ENCODE measurements at regions of chr1 and their contacts with region 1.

Region 1: GRCh38 chr1:89276690-89277089 is 4.0 kb upstream of the GBP5 start:
- DNase-seq: no peak
- ATAC-seq: peak in 1 of 4 donors; percentile 53
- H3K4me3 ChIP-seq: no peak overlapping the region
- H3K27ac ChIP-seq: peak overlapping the region in 1 of 12 donors; percentile 32
- H3K4me1 ChIP-seq: peaks cover 0 to 65% (median 0%) of the 10 kb centered on the region in 12 donors
- H3K27me3 ChIP-seq: no peaks in the 10 kb centered on the region
- CTCF ChIP-seq: peak in 3 of 12 donors; percentile 14 to 39 (median 34)
- POLR2A ChIP-seq: no peak

Region 2: DNA sequence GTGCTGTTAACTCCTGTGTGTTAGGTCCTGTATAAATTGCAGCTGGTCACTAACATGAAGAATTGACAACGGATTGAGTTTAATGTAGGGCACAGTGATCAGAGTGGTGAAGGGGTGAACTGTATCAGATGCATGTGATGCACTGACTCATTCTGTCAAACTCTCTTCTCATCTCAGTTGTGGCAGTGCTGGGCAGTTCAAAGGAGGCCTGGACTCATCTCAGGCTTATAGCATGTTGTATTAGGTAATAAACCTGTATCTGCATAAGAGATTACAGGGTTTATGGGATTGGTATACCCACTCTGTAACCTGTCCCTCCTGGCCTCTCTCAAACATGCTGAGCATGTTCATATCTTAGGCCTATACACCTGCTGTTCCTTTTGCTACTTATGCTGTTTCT is 241.6 kb before region 1 on chr1:
- intact Hi-C with region 1: no loop called
- DNase-seq: no peak
- ATAC-seq: no peak
- H3K4me3 ChIP-seq: no peak overlapping the region
- H3K27ac ChIP-seq: no peak overlapping the region
- H3K4me1 ChIP-seq: no peaks in the 10 kb centered on the region
- H3K27me3 ChIP-seq: no peaks in the 10 kb centered on the region
- CTCF ChIP-seq: no peak
- POLR2A ChIP-seq: no peak

Region 3: DNA sequence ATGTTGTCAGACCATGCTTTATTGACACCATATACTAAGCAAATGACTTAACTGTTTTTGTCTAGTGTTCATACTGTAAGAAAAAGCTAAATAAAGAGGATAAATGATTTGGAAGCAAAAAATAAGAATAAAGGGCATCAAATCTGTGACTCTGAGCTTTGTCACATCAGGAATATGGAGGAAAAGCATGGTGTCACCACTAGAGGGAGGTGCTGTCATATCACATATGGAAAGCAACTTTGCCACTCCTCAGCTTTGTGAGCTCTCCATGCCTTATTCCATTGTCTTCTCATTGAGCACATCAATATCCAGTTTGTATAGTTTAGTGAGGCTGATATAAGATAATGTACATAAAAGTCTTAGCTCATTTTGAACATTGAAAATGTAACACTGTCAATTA is 190.9 kb before region 1 on chr1:
- intact Hi-C with region 1: loop called in 1 of 10 experiments (anchors 5 kb)
- DNase-seq: peak in 1 of 5 donors; percentile 42
- ATAC-seq: peak in 3 of 4 donors; percentile 41 to 76 (median 52)
- H3K4me3 ChIP-seq: no peak overlapping the region
- H3K27ac ChIP-seq: no peak overlapping the region
- H3K4me1 ChIP-seq: peaks cover 0 to 12% (median 0%) of the 10 kb centered on the region in 12 donors
- H3K27me3 ChIP-seq: no peaks in the 10 kb centered on the region
- CTCF ChIP-seq: peak in 10 of 12 donors; percentile 53 to 90 (median 76)
- POLR2A ChIP-seq: no peak